ENCODE measurements at regions of chr13 and their contacts with region 1.

Region 1: DNA sequence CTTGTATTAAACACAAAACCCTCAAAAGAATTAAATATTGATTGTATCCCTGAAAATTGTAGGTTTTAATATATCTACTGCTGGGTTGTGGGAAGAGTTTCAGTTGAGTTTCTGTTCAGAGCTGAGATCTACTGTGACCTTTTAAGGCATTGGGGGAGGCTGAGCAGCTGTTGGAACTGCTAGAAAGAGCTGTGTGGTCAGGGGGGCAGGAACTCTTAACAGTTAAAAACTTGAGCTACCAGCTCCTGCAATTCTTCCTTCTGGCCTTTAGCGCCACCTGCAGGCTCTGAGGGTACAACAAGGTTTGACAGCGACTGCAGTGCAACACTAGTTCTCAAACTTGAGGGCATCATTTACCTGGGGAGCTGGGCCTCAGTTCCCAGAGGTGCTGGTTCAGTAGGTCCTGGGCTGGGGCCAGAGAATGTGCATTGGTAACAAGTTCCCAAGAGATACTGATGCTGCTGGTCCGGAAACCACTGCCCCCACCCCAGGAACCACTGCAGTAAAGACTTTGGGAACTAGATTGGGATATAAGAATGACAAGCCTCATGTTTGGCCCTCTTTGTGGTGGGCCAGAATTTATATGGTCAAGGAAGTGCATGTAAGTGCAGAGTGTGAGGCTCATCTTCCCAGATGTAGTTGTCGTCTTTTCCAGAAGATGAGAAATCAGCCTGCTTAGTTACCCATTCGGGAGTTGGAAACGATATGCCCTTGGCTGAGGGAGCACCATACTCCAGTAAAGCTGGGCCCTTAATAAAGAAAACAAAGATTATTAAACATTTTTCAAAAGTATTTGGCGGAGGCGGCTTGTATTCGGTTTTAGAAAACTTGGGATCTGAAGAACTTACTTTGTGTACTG is 2.6 kb downstream of the RNASEH2B start:
- DNase-seq: peak; percentile 76 to 96 (median 90)
- ATAC-seq: peak; percentile 37 to 56 (median 46)
- H3K4me3 ChIP-seq: peak overlapping the region; percentile 89 to 92
- H3K4me3 Mint-ChIP-seq: peak overlapping the region; percentile 88 to 96 (median 94)
- H3K27ac ChIP-seq: peak overlapping the region; percentile 96
- H3K27ac Mint-ChIP-seq: peak overlapping the region; percentile 94
- H3K4me1 ChIP-seq: peaks cover 33 to 38% of the 10 kb centered on the region in 2 experiments
- H3K4me1 Mint-ChIP-seq: peaks cover 55 to 67% (median 64%) of the 10 kb centered on the region in 3 donors
- H3K27me3 ChIP-seq: no peaks in the 10 kb centered on the region
- H3K27me3 Mint-ChIP-seq: no peaks in the 10 kb centered on the region

Region 2: DNA sequence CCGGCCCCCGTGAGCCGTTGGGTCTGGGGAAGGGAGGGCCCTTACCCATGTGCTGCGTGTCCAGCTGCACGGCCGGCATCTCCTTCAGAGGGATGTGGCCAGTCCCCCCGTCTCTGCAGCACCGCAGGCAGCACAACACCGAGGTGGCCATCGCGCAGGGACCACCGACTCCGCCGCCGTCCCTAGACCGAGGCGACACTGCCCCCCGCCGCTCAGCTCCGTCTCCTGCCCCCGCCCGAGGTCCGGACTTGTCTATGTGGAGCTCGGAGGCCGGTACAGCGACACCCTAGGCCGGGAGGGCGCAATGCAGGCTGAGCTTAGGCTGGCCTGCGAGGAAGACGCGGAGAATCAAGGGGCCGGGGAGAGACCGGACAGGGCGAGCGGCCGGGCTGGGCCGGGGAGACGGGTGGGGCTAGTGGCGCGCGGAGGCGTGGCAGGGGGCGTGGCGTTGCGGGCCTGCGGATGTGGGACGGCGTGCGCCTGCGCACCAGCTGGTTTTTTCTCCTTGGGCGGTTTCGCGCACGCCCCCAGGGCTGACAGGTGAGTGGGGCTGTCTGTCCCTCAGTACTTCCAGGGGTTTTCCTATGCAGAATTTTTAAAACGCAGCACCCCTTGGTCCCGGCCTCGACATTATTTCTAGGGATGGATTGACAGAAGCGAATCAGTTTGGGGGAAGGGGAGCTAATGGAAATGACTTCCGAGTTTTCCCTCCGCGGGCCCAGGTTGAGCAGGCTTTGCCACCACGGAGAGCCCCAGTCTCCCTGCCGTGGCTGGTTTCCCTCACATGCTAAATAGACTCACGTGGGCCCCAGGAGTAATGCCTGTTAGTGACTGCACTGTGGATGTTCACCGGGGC is 975.9 kb before region 1 on chr13 and contains the start of gene SPRYD7:
- CTCF ChIA-PET with region 1: interaction called, 3 to 13 read pairs
- POLR2A ChIA-PET with region 1: no interaction called
- DNase-seq: peak; percentile 75 to 96 (median 87)
- ATAC-seq: peak; percentile 84 to 89 (median 88)
- H3K4me3 ChIP-seq: peak within 1 kb of the TSS; percentile 91 to 97
- H3K4me3 Mint-ChIP-seq: peak within 1 kb of the TSS; percentile 85 to 95 (median 90)
- H3K27ac ChIP-seq: peak within 1 kb of the TSS; percentile 39
- H3K27ac Mint-ChIP-seq: peak within 1 kb of the TSS; percentile 72 to 88
- H3K4me1 ChIP-seq: peaks cover 5 to 14% of the 10 kb centered on the region in 2 experiments
- H3K4me1 Mint-ChIP-seq: peaks cover 13 to 25% (median 22%) of the 10 kb centered on the region in 3 donors
- H3K27me3 ChIP-seq: peaks cover 0 to 11% of the 10 kb centered on the region in 2 experiments
- H3K27me3 Mint-ChIP-seq: no peaks in the 10 kb centered on the region
- total RNA-seq, gene SPRYD7: 1.6 to 4.7 (median 3.2) TPM

Region 3: DNA sequence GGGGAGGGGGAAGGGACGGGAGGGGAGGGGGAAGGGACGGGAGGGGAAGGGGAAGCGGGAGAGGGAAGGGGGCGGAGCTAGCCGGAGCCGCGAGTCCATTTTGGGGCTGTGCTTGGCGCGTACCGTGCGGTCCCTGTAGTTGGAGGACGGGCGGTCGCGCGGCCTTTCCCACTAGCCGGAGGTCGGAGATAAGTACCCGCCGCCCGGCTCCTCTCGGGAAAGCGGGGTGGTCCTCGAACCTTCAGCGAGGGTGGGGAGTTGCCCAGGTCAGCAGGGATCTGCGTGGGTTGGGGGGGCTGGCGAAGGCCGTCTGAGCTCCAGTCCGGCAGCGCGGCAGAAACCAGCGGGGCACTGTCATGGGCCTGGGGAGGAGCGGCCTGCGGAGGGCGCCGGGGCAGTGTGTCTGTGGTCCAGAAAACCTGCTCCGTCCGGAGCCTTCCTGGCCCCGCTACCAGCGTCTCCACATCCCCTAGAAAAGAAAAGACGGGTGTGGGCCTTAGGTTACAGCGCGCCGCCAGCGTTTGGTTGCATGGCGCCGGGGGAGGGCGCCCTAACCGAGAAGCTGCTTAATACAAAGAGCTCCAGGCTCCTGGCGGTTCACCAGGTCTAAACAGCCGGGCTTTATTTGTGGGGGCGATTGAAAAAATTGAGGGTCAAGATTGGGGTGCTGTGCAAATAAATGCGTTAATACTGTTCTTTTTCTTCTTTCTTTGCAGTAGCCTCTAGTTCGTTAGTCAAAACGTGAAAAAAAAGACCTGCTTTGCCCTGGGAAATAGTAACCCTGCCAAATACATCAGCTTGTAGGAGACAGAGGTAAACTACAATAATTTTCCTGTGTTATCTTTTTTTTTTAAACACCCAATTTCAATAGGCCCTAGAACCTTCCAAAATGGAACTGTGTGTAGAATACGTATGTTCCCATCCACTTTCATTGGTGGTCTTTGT is 914.9 kb before region 1 on chr13 and contains the start of gene TRIM13:
- CTCF ChIA-PET with region 1: interaction called, 9 to 43 read pairs
- POLR2A ChIA-PET with region 1: interaction called, 3 to 9 read pairs
- DNase-seq: peak; percentile 66 to 89 (median 79)
- ATAC-seq: peak; percentile 83 to 85 (median 84)
- H3K4me3 ChIP-seq: peak within 1 kb of the TSS; percentile 81 to 98
- H3K4me3 Mint-ChIP-seq: peak within 1 kb of the TSS; percentile 85 to 86 (median 85)
- H3K27ac ChIP-seq: peak within 1 kb of the TSS; percentile 83
- H3K27ac Mint-ChIP-seq: peak within 1 kb of the TSS; percentile 85 to 87
- H3K4me1 ChIP-seq: peaks cover 26 to 34% of the 10 kb centered on the region in 2 experiments
- H3K4me1 Mint-ChIP-seq: peaks cover 39 to 54% (median 53%) of the 10 kb centered on the region in 3 donors
- H3K27me3 ChIP-seq: no peaks in the 10 kb centered on the region
- H3K27me3 Mint-ChIP-seq: no peaks in the 10 kb centered on the region
- total RNA-seq, gene TRIM13: 20.5 to 27.8 (median 23.4) TPM

Region 4: DNA sequence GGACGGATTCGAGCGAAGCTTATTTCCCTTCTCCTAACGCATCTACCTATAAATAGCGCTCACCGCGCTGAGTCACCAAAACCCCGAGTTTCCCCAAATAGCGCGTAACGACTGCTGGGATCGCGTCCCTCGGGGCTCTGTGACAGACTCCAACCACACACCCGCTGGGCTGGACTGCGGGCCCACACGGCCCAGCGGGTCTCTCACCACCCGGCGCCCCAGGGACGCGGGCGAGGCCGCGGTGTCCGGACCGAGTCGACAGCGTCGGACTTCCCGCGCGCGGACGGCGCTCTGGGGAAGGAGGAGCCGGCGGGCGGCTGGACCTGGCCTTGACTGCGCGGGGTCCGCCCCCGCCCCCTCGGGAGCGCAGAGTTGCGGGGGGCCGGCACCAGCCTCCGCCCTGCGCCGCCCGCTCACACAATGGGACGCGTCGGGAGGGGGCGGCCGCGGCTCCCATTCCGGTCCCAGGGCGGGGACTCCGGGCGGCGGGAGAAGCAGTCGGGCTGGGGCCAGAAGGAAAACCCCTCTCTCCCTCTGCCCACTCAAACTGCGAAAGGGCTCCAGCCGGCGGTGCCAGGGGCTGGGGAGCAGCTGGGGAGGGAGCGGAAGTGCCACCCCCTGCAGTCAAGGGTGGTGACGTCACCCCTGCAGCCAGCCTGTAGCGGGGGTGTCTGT is 788.2 kb before region 1 on chr13:
- CTCF ChIA-PET with region 1: interaction called in 1 of 2 experiments, 15 read pairs
- POLR2A ChIA-PET with region 1: no interaction called
- DNase-seq: peak in 34 of 35 experiments; percentile 48 to 89 (median 62)
- ATAC-seq: peak; percentile 71 to 76 (median 72)
- H3K4me3 ChIP-seq: peak overlapping the region; percentile 74
- H3K4me3 Mint-ChIP-seq: peak overlapping the region; percentile 84 to 92 (median 85)
- H3K27ac ChIP-seq: peak overlapping the region; percentile 93
- H3K27ac Mint-ChIP-seq: peak overlapping the region; percentile 90 to 95
- H3K4me1 ChIP-seq: peaks cover 22 to 46% of the 10 kb centered on the region in 2 experiments
- H3K4me1 Mint-ChIP-seq: peaks cover 40 to 61% (median 51%) of the 10 kb centered on the region in 3 donors
- H3K27me3 ChIP-seq: peaks cover 0 to 25% of the 10 kb centered on the region in 2 experiments
- H3K27me3 Mint-ChIP-seq: peaks cover 4 to 12% of the 10 kb centered on the region in 2 donors

Region 5: GRCh38 chr13:50893211-50893852 is 18.8 kb before region 1 on chr13:
- CTCF ChIA-PET with region 1: interaction called, 6 to 69 read pairs
- POLR2A ChIA-PET with region 1: interaction called, 3 to 10 read pairs
- DNase-seq: peak in 5 of 35 experiments; percentile 2 to 72 (median 10)
- ATAC-seq: peak; percentile 89 to 92 (median 92)
- H3K4me3 ChIP-seq: peak overlapping the region in 1 of 2 donors; percentile 15
- H3K4me3 Mint-ChIP-seq: peak overlapping the region; percentile 74 to 76 (median 74)
- H3K27ac ChIP-seq: peak overlapping the region; percentile 87
- H3K27ac Mint-ChIP-seq: peak overlapping the region; percentile 98 to 99
- H3K4me1 ChIP-seq: peaks cover 17 to 27% of the 10 kb centered on the region in 2 experiments
- H3K4me1 Mint-ChIP-seq: peaks cover 43 to 45% (median 45%) of the 10 kb centered on the region in 3 donors
- H3K27me3 ChIP-seq: no peaks in the 10 kb centered on the region
- H3K27me3 Mint-ChIP-seq: no peaks in the 10 kb centered on the region

Measured in T-cell (primary cell).